Common myeloid progenitor, CD34-positive (primary cell): ENCODE measurements at regions of chr20 and their contacts with region 1.

Region 1: DNA sequence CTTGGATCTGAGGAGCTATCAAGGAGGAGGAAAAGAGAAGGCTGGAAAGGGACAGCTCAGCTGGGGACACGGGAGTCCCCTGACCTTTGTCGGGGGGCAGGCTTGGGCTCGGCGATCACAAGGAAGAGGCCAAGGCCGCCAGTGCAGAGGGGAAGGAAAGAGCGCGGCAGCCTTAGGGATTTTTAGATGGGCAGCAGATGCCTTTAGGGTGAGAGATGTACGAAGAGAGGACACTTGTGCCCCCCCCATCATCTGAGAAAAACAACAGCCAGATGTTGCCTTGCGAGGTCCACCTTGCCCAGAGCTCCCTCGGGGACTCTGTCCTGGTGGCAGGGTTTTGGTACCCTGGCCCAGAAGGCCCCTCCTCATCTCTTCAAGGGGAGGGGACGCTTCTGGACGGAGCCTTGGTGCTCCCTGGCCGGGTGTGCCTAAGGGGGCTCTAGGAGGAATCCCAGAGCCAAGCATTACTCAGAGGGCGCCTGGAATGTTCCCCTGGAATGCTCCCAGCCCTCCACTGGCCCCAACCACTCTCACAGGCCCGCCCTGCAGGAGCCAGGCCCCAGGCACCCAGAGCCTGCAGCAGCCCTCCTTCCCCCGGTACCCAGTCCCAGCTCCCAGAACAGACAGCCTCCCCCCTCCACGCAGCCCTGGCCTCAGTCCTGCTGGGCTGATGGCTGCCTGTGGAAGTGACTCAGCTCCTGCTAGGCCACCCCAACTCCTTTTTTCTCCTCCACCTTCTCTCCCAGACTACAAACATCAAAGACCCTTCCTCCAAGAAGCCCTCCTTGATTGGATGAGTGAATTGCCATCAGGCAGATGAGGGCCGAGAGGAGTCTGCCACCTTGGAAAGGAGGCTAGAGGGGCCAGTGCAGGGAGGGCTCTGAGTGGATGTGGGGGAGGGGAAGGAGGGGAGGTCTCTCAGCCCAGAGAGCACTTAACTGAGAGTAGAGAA is 1.8 kb downstream of the ADAM33 start:
- DNase-seq: no peak
- H3K4me3 ChIP-seq: no peak overlapping the region
- H3K27ac ChIP-seq: no peak overlapping the region
- H3K4me1 ChIP-seq: peaks cover 0 to 9% (median 4%) of the 10 kb centered on the region in 4 experiments
- H3K27me3 ChIP-seq: peaks cover 0 to 74% (median 30%) of the 10 kb centered on the region in 5 experiments

Region 2: DNA sequence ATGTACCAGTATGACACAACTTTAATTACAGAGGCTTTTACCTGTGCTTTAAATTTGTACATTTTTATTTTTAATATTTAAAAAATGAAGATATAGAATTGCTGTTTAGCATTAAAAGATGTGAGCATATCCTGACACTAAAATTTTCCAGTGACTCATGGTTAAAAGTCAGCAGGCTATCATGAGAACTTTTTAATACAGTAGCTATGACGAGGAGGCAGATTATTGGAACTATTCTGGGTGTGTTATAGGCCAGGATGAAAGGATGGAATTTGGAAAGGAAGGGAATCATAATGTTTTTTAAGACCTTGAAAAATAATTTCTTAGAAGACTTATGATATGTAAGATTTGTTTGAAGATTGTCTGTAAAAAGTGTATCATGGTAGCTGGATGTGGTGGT is 107.9 kb before region 1 on chr20:
- CTCF ChIA-PET with region 1: no interaction called
- POLR2A ChIA-PET with region 1: no interaction called
- DNase-seq: no peak
- H3K4me3 ChIP-seq: no peak overlapping the region
- H3K27ac ChIP-seq: no peak overlapping the region
- H3K4me1 ChIP-seq: peaks cover 0 to 2% (median under 1%) of the 10 kb centered on the region in 4 experiments
- H3K27me3 ChIP-seq: no peaks in the 10 kb centered on the region

Region 3: DNA sequence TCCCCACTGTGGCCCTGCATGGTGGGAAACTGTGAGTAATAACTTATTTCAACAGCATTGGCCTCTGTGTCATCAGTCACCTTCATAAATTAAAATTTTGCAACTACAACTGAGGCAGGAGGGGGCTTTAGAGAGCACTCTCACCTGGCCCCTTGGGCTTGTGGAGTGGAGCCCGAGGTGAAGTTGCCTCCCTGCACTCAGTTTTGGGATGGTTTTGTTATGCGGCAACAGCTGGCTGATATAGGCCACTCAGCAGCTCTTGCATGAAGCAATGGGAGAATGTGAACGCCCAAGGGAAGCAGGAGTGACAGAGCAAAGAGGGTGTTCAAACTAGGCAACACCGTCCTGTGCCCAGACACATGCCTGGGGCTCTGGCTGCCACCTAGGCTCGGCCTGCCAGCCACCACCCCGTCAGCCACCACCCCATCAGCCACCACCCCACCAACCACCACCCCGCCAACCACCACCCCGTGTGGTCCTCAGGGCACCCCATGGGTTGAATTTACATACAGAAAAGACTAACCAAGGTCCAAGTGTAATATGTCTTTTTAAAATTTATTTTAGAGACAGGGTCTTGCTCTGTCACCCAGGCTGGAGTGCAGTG is 12.5 kb before region 1 on chr20:
- CTCF ChIA-PET with region 1: interaction called, 28 read pairs
- POLR2A ChIA-PET with region 1: interaction called, 3 read pairs
- DNase-seq: no peak
- H3K4me3 ChIP-seq: no peak overlapping the region
- H3K27ac ChIP-seq: no peak overlapping the region
- H3K4me1 ChIP-seq: peaks cover 0 to 14% (median 10%) of the 10 kb centered on the region in 4 experiments
- H3K27me3 ChIP-seq: peaks cover 0 to 37% (median 13%) of the 10 kb centered on the region in 5 experiments

Region 4: GRCh38 chr20:3696200-3696599 is 16.2 kb after region 1 on chr20:
- CTCF ChIA-PET with region 1: interaction called, 24 read pairs
- POLR2A ChIA-PET with region 1: interaction called, 6 read pairs
- DNase-seq: peak in 1 of 3 donors; percentile 15
- H3K4me3 ChIP-seq: no peak overlapping the region
- H3K27ac ChIP-seq: no peak overlapping the region
- H3K4me1 ChIP-seq: no peaks in the 10 kb centered on the region
- H3K27me3 ChIP-seq: peaks cover 0 to 4% (median 0%) of the 10 kb centered on the region in 5 experiments

Region 5: DNA sequence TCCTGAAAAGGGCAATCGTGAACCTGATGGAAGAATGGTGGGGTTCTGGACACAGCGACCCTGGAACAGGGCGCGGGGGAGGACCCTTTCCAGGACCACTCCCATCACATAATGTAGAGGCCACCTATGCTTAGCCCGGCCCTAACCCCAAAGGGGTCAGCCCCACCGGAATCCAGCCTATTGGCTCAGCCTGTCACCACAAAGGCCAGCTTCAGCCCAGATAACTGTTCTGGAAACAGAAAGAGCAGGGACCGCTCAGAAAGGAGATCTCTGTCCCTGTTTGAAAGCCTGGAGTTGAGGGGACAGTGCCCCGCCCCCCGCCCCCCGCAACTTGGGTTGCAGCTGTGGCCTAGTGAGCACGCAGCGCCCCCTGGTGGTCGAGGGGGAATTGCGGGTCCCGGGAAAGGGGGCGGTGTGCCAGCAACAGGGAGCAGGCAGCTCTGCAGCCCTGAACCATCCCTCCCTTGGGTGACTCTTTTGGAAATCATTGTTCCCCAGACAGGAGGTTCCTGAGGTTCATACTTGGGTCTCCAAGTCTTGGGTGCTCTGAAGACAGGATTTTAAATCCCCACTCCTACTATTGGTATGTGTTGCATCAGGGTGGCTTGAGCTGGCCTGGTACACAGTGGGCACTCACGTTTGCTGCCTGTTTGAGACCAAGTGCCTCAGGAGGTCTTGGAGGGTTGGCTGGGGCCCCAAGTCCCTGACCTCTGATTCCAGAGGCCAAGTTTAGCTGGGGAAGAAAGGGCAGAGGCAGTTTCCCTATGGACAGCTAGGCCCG is 30.9 kb after region 1 on chr20:
- CTCF ChIA-PET with region 1: interaction called, 121 read pairs
- POLR2A ChIA-PET with region 1: interaction called, 4 read pairs
- DNase-seq: peak; percentile 70 to 81 (median 79)
- H3K4me3 ChIP-seq: no peak overlapping the region
- H3K27ac ChIP-seq: no peak overlapping the region
- H3K4me1 ChIP-seq: peaks cover 0 to 17% (median 5%) of the 10 kb centered on the region in 4 experiments
- H3K27me3 ChIP-seq: peaks cover 0 to 2% (median 0%) of the 10 kb centered on the region in 5 experiments